ENCODE measurements at regions of chr17 and their contacts with region 1.

Region 1: DNA sequence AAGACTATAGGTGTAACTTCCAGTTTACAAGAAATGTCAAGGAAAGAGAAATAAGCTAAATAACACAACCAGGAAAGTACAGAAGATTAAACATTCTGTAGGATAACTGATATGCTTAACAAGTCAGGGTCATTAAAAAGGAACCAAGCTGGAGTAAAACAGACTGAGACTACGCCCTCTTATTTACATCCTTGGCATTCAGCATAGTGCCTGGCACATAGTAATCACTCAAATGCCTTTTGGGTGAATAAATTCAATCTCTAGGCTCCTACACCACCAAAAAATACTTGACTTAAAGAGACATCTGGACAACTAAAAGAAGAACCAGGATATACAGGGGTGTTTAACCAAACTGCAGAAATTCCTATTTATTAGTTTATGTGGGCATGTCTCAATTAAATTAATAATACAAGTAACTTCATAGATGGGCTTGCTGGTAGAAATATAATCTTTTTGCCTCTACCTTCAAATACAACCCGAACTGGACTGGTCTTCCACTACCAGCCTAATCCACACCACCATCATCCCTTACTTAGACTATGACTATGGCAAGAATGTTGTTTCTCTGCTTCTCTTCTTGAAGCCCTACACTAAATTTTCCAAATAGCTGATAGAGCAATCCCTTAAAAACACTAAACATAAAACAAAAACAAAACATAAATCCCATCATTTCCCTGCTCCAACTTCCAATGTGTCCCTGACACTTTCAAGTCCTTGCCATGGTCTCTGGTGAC is 47.7 kb upstream of the ULK2 start:
- DNase-seq: no peak
- ATAC-seq: no peak
- H3K4me3 ChIP-seq: no peak overlapping the region
- H3K27ac ChIP-seq: no peak overlapping the region
- H3K4me1 ChIP-seq: no peaks in the 10 kb centered on the region
- H3K27me3 ChIP-seq: no peaks in the 10 kb centered on the region
- CTCF ChIP-seq: no peak

Region 2: GRCh38 chr17:19805006-19805405 is 110.4 kb before region 1 on chr17:
- intact Hi-C with region 1: loop called in 1 of 2 experiments (anchors 10 kb)
- DNase-seq: no peak
- ATAC-seq: no peak
- H3K4me3 ChIP-seq: no peak overlapping the region
- H3K27ac ChIP-seq: no peak overlapping the region
- H3K4me1 ChIP-seq: no peaks in the 10 kb centered on the region
- H3K27me3 ChIP-seq: no peaks in the 10 kb centered on the region
- CTCF ChIP-seq: no peak

Region 3: DNA sequence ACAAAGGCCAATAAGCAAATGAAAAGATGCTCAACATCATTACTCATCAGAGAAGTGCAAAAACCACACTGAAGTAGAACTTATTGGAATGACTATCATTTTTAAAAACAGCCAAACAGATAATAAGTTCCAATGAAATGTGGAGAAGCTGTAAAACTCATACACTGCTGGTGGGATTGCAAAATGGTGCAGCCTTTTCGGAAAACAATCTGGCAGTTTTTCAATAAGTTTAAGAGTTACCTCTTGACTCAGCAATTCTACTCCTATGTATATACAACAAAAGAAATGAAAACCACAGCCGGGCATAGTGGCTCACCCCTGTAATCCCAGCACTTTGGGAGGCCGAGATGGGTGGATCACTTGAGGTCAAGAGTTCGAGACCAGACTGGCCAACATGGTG is 12.9 kb after region 1 on chr17:
- intact Hi-C with region 1: loop called in 1 of 2 experiments (anchors 2 kb)
- DNase-seq: no peak
- ATAC-seq: no peak
- H3K4me3 ChIP-seq: no peak overlapping the region
- H3K27ac ChIP-seq: no peak overlapping the region
- H3K4me1 ChIP-seq: no peaks in the 10 kb centered on the region
- H3K27me3 ChIP-seq: no peaks in the 10 kb centered on the region
- CTCF ChIP-seq: no peak